A673 (cell line): ENCODE measurements at regions of chr11 and their contacts with region 1.

Region 1: DNA sequence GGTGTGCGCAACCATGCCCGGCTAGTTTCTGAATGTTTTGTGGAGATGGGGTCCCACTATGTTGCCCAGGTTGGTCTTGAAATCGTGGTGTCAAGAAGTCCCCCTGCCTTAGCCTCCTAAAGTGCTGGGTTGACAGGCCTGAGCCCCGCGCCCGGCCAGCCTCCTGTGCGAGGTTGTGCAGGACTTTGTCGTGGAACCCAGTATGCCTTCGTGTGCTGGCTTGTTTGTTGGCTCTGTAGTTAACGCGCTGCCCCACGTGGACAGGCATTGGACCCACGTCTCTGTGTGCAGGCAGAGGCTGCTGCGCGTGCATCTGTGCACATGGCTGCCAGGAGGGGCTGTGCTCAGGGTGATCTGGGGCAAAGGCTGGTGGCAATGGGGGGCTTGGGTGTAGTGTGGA is 33.9 kb upstream of the ZNF195 start:
- DNase-seq: no peak
- H3K4me3 ChIP-seq: no peak overlapping the region
- H3K27ac ChIP-seq: no peak overlapping the region
- H3K4me1 ChIP-seq: no peaks in the 10 kb centered on the region
- H3K27me3 ChIP-seq: no peaks in the 10 kb centered on the region
- CTCF ChIP-seq: no peak

Region 2: DNA sequence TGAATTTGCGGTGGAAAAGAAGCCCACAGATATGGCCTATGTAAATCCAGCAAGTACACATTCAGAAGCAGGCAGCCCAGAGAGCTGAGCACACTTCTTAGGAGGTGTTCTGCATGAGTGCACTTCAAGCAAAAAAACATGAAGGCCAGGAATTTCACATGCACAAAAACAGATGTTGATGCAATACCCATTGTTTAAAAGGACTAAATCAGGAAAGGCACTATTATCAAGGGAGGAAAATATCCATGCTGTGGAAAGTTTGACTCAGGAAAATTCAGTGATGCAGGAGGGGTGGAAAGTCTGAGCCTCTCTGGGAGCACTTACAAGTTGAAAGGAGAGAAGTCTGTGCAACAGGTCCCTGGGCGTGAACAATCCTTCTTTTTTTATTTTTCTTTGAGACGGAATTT is 339.8 kb before region 1 on chr11:
- CTCF ChIA-PET with region 1: no interaction called
- POLR2A ChIA-PET with region 1: no interaction called
- intact Hi-C with region 1: no loop called
- DNase-seq: peak; percentile 72
- H3K4me3 ChIP-seq: no peak overlapping the region
- H3K27ac ChIP-seq: no peak overlapping the region
- H3K4me1 ChIP-seq: peaks cover 10% of the 10 kb centered on the region
- H3K27me3 ChIP-seq: no peaks in the 10 kb centered on the region
- CTCF ChIP-seq: no peak

Region 3: GRCh38 chr11:3177931-3178330 is 234.9 kb before region 1 on chr11:
- CTCF ChIA-PET with region 1: no interaction called
- POLR2A ChIA-PET with region 1: no interaction called
- intact Hi-C with region 1: no loop called
- DNase-seq: no peak
- H3K4me3 ChIP-seq: no peak overlapping the region
- H3K27ac ChIP-seq: no peak overlapping the region
- H3K4me1 ChIP-seq: no peaks in the 10 kb centered on the region
- H3K27me3 ChIP-seq: no peaks in the 10 kb centered on the region
- CTCF ChIP-seq: no peak

Region 4: GRCh38 chr11:3205261-3206135 is 207.3 kb before region 1 on chr11:
- CTCF ChIA-PET with region 1: no interaction called
- POLR2A ChIA-PET with region 1: no interaction called
- intact Hi-C with region 1: no loop called
- DNase-seq: no peak
- H3K4me3 ChIP-seq: no peak overlapping the region
- H3K27ac ChIP-seq: no peak overlapping the region
- H3K4me1 ChIP-seq: no peaks in the 10 kb centered on the region
- H3K27me3 ChIP-seq: peaks cover 19% of the 10 kb centered on the region
- CTCF ChIP-seq: no peak

Region 5: DNA sequence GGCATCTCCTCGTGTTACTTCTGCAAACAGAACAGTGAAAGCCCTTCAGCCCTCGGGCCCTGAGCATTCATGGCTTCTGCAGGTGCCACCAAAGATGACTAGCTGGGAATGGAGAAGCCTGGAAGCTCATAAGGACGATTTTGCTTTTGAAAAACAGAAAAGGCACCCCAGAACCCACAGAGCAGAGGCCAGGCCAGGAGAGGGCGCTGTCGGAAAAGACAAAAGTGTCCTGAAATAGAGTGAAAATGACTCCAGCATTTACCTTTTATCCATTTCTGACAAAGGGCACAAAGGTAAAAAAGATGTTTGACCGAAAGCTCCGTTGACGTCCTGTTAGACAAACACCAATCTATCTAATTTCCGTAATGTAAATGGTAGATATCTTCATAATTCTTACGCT is 71.5 kb before region 1 on chr11:
- CTCF ChIA-PET with region 1: interaction called, 16 read pairs
- POLR2A ChIA-PET with region 1: no interaction called
- intact Hi-C with region 1: no loop called
- DNase-seq: peak; percentile 67
- H3K4me3 ChIP-seq: no peak overlapping the region
- H3K27ac ChIP-seq: no peak overlapping the region
- H3K4me1 ChIP-seq: no peaks in the 10 kb centered on the region
- H3K27me3 ChIP-seq: no peaks in the 10 kb centered on the region
- CTCF ChIP-seq: peak; percentile 84